IMR-90 (cell line): ENCODE measurements at regions of chr5 and their contacts with region 1.

Region 1: GRCh38 chr5:14035859-14036440 is 91.5 kb upstream of the DNAH5 start:
- DNase-seq: peak; percentile 100
- ATAC-seq: peak; percentile 68
- H3K4me3 ChIP-seq: no peak overlapping the region
- H3K27ac ChIP-seq: peak overlapping the region; percentile 99
- H3K4me1 ChIP-seq: peaks cover 47% of the 10 kb centered on the region
- H3K27me3 ChIP-seq: no peaks in the 10 kb centered on the region
- CTCF ChIP-seq: no peak
- POLR2A ChIP-seq: no peak
- RAD21 ChIP-seq: peak; percentile 32

Region 2: GRCh38 chr5:13994621-13995253 is 41.2 kb before region 1 on chr5:
- CTCF ChIA-PET with region 1: no interaction called
- POLR2A ChIA-PET with region 1: interaction called, 8 read pairs
- dilution Hi-C with region 1: no loop called
- in situ Hi-C with region 1: no loop called
- intact Hi-C with region 1: loop called (anchors 2 kb)
- DNase-seq: peak; percentile 94
- ATAC-seq: peak; percentile 82
- H3K4me3 ChIP-seq: no peak overlapping the region
- H3K27ac ChIP-seq: peak overlapping the region; percentile 91
- H3K4me1 ChIP-seq: peaks cover 25% of the 10 kb centered on the region
- H3K27me3 ChIP-seq: no peaks in the 10 kb centered on the region
- CTCF ChIP-seq: no peak
- POLR2A ChIP-seq: no peak
- RAD21 ChIP-seq: 0 out of 2 replicates have a peak, but pooled peaks have one; percentile 1

Region 3: DNA sequence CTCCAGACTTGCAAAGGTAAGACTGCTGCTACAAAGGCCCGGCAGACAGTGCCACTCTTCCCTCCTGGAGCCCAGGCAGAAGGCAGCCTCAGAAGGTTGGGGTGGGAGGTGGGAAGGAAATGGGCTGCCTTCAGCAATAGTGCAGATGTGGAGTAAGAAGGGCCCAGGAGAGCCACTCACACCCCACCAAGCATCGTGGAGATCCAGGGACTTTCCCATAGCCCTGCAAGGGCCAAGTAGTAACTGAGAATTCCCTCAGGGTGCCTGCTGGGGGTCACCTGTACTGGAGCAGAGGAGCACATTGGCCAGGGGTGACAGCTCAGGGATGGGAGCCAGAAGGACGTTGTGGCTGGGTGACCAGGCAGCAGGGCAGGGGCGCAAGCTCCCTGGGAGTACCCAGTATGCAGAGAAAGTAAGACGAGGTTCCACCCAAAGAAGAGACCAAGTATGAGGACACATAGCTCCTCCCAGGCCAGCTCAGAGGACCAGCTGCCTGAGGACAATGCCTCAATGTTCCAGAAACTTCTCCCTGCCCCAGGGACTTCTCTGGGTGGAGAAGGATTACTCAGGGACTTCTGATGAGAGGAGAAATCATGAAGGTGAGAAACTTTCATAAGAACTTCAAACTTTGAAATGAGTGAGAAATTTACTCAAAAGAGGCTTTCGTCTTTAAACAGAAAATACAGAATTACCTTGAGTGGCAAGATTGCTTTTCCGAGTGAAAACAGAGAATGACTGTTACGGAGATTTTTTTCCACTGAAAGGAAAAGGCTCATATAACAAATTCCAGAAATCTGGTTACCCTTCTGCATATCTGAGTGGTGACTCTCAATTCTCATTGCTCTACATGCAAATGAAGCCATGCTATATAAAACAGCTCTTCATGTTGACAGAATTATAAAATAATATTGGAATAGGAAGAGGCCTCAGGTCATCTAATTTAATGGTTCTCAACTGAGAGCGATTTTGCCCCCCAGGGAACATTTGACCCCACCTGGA is 19.3 kb after region 1 on chr5:
- CTCF ChIA-PET with region 1: no interaction called
- POLR2A ChIA-PET with region 1: interaction called, 3 read pairs
- dilution Hi-C with region 1: no loop called
- in situ Hi-C with region 1: no loop called
- intact Hi-C with region 1: loop called (anchors 1 kb)
- DNase-seq: peak; percentile 81
- ATAC-seq: peak; percentile 51
- H3K4me3 ChIP-seq: no peak overlapping the region; the same call in 1 of the 2 replicates
- H3K27ac ChIP-seq: peak overlapping the region; percentile 100
- H3K4me1 ChIP-seq: peaks cover 24% of the 10 kb centered on the region
- H3K27me3 ChIP-seq: no peaks in the 10 kb centered on the region
- CTCF ChIP-seq: no peak
- POLR2A ChIP-seq: no peak
- RAD21 ChIP-seq: no peak

Region 4: DNA sequence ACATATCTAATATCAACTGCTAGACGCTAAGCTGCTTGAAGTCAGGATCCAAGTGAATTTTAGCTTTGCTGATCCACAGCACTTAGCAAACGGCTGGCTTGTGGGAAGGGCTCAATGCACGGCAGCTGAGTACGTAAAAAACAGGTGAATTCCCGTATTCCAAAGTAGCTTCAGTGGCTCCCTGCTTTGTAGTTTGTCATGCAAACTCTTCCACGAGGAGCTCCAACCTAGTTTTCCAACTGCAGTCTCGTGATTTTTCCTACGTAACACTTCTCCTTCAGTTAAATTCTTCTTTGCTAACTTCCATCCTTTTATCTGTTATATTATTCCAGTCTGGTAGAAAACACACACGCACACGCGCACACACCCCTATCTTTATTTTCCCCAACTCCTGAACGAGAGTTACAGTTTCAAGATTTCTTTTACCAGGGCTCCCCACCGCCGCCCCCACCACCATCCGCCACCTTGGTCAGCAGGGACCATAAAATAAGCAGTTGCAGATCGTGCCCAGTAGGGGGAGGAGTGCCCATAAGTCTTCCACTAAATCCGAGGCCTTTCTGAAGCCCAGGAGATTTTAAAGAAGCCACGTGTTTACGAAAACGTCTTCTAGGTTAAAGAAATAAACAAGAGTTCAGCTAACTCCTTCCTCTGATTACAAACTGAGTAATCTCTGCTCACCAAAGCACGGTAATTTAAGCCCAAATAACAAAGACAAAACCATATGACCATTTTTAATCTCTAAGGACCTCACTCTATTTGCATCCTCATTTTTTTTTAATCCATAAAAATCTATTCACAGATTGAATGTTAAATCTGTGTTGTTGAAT is 72.4 kb after region 1 on chr5:
- CTCF ChIA-PET with region 1: interaction called, 4 read pairs
- POLR2A ChIA-PET with region 1: no interaction called
- dilution Hi-C with region 1: no loop called
- in situ Hi-C with region 1: no loop called
- intact Hi-C with region 1: loop called (anchors 2 kb)
- DNase-seq: peak; percentile 91
- ATAC-seq: peak; percentile 83
- H3K4me3 ChIP-seq: no peak overlapping the region
- H3K27ac ChIP-seq: peak overlapping the region; percentile 54
- H3K4me1 ChIP-seq: peaks cover 9% of the 10 kb centered on the region
- H3K27me3 ChIP-seq: no peaks in the 10 kb centered on the region
- CTCF ChIP-seq: peak; percentile 72
- POLR2A ChIP-seq: no peak
- RAD21 ChIP-seq: peak; percentile 72

Region 5: DNA sequence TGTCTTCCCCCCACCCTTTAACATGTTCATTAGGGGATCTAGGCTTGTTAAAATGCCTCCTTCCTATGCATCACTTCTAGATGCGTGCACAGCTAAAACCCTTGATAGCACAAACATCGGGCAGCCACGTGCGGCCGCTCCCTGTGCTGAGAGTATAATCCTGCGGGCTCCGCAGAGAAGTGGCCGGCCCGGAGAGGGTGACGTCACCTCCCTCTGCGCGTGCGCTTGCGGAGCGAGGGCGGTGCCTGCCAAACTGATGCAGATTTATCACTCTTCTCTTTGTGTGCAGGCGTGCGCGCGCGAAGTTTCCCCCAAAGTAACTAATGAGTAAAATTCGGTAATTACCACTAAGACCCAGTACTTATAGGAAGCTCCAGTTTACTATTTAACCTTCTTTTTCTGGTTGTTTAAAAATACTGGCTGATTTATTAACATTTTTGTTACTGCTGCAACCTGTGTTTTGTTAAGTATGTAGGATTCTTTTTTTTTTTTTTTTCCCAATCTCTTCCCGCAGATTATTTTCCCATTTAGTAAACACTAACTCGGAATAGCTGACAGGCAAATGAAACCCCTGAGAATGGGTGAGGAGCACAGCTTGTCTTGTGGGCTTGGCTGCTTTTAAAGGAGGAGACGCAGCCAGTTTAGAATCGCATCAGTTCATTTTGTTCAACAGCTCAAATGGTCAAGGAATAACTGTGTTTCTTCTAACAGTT is 228.8 kb after region 1 on chr5:
- CTCF ChIA-PET with region 1: interaction called, 3 read pairs
- POLR2A ChIA-PET with region 1: no interaction called
- dilution Hi-C with region 1: no loop called
- in situ Hi-C with region 1: no loop called
- intact Hi-C with region 1: loop called (anchors 2 kb)
- DNase-seq: peak; percentile 94
- ATAC-seq: peak; percentile 69
- H3K4me3 ChIP-seq: no peak overlapping the region
- H3K27ac ChIP-seq: peak overlapping the region; percentile 83
- H3K4me1 ChIP-seq: peaks cover 50% of the 10 kb centered on the region
- H3K27me3 ChIP-seq: no peaks in the 10 kb centered on the region
- CTCF ChIP-seq: no peak
- POLR2A ChIP-seq: peak; percentile 65
- RAD21 ChIP-seq: no peak

Region 6: GRCh38 chr5:14664302-14665100 is 628.6 kb after region 1 on chr5 and contains the start of gene OTULIN:
- CTCF ChIA-PET with region 1: no interaction called
- POLR2A ChIA-PET with region 1: no interaction called
- dilution Hi-C with region 1: no loop called
- in situ Hi-C with region 1: no loop called
- intact Hi-C with region 1: no loop called
- DNase-seq: peak; percentile 85
- ATAC-seq: peak; percentile 91
- H3K4me3 ChIP-seq: peak within 1 kb of the TSS; percentile 64
- H3K27ac ChIP-seq: peak within 1 kb of the TSS; percentile 85
- H3K4me1 ChIP-seq: peaks cover 11% of the 10 kb centered on the region
- H3K27me3 ChIP-seq: no peaks in the 10 kb centered on the region
- CTCF ChIP-seq: no peak
- POLR2A ChIP-seq: peak; percentile 67
- RAD21 ChIP-seq: no peak
- total RNA-seq, gene OTULIN: 19.5 and 20.3 TPM in 2 replicates